Left colon (tissue), 2 donors: ENCODE measurements at regions of chr1 and their contacts with region 1.

Region 1: GRCh38 chr1:47192458-47193384 is 2.9 kb upstream of the PDZK1IP1 start:
- DNase-seq: peak; percentile 66 to 83
- ATAC-seq: peak; percentile 65

Region 2: GRCh38 chr1:47225430-47226100 is 32.8 kb after region 1 on chr1:
- intact Hi-C with region 1: no loop called
- DNase-seq: no peak
- ATAC-seq: peak; percentile 33

Region 3: DNA sequence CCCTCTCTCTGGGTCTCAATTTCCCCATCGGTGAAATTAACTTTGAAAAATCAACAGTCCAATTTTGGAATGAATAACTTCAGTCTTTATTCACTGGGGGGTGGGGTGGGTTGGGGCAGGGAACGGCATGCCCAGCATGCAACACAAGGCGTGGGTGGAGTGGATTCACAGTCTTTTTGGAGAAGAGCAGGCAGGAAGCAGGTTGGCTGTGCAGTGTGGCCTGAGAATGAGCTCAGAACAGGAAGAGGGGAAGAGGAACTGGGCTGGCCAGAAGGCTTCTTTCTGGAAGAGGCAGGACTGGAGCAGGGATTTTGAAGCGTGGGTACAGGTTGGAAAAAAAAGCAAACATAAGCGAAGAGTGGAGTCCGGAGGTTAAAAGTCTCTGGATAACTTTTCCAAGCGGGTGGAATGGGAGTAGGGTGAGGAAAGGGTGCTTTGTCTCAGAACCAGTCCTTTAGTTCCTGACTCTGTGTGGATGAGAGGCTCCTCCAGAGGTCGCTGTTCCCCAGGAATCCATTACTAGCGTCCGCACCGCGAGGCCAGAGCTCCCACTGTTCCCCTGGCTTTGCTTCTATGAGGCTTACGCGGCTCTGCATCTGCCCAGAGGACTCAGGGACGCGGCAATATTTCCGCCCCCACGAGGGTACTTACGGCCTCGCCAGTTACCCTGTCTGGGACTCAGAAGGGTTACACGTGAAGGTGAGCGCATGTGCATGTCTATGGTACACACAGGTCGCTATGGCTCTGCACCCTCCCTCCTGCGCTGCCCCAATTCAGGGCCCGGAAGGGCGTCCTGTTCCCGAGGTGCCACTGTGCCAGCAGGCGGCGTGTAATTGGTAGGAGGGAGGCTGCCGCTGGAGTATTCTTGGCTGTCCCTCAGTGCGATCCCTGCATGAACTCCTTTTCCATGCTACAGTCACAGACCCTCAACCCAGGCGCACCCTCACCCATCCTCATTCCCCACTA is 239.6 kb after region 1 on chr1:
- intact Hi-C with region 1: loop called in 1 of 2 experiments (anchors 5 kb)
- DNase-seq: peak; percentile 80 to 92
- ATAC-seq: peak; percentile 64

Region 4: DNA sequence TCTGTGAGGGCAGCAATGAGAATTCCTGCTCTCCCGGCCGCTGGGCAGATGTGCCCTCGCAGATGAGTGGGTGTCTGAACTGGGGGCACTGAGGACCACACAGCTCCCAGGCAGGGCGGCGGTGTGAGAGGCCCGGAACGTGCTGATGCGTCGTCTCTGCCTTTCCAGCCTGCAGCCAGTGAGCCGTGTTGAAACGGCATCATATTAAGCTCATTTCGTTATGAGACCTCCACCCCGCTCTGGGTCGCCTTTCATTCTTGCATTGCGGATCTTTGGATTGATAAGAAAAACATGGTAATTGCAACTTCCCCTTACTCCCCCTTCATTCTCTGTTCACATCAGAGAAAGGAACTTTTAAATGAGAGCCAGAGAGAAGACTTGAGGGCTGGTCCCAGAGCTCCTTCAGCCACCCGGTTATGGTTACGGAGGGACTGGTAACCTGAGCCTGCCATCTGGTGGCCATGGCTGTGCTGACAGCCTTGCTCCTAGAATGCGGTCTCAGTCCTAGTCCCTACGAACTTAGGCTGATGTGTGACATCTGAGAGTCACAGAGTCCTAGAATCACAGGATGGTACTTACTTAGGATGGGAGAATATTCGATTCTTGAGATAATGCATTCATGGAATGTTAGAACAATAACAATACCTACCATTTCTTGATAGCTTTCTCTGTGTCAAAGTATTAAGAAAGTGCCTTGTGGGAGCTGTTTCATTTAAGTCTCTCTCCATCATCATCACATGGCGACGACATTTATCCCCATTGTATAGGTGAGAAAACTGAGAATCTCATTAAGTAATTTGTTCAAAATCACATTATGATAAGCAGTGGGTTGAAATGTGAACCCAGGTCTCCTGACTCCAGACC is 533.5 kb after region 1 on chr1:
- intact Hi-C with region 1: loop called in 1 of 2 experiments (anchors 5 kb)
- DNase-seq: peak; percentile 84 to 92
- ATAC-seq: peak; percentile 52